Sigmoid colon (tissue), 7 donors: ENCODE measurements at regions of chr10 and their contacts with region 1.

Region 1: DNA sequence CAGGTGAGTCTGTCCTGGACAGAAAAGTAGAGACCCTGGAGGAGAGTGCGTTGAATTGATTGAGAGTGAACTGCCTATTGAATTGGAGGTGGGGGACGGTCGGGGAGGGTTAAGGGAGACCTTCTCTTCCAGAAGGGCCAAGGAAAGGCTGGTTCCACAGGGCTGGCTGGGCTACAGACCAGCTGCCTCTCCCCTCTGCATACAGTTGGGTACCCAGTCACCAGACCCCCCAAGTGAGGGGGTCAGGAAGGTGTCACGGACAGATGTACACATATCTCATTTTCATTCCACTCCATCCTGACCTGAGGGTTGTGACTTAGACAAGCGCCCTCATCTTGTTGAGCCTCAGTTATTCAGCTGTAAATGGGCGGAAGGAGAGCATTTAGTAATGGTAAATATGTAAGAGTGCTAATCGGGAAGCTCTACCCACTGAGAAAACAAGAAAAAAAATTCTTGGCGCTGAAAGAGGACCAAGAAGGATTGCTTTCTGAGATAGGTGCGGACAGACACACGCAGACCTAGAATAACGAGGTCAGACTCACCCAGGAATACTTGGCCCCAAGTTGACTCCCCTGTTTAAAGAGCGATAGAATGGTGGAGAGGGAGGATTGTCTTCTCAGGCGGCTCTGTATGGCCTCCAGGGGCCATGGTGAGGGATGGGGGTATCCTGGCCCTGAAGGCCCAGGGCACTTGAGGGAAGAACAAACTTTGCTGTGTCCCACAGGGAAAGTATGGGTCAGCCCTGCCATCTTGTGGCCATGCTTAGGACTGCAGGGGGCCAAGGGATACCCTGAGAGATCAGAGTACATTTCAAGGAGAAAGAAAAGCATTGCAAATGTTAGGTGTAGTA is 7.2 kb upstream of the MBL2 start:
- DNase-seq: no peak
- H3K4me3 ChIP-seq: no peak overlapping the region
- H3K27ac ChIP-seq: no peak overlapping the region
- H3K4me1 ChIP-seq: no peaks in the 10 kb centered on the region
- H3K27me3 ChIP-seq: peaks cover 0 to 6% (median 0%) of the 10 kb centered on the region in 3 donors
- CTCF ChIP-seq: peak; percentile 11 to 72 (median 53)
- EP300 ChIP-seq: no peak
- POLR2A ChIP-seq: no peak

Region 2: DNA sequence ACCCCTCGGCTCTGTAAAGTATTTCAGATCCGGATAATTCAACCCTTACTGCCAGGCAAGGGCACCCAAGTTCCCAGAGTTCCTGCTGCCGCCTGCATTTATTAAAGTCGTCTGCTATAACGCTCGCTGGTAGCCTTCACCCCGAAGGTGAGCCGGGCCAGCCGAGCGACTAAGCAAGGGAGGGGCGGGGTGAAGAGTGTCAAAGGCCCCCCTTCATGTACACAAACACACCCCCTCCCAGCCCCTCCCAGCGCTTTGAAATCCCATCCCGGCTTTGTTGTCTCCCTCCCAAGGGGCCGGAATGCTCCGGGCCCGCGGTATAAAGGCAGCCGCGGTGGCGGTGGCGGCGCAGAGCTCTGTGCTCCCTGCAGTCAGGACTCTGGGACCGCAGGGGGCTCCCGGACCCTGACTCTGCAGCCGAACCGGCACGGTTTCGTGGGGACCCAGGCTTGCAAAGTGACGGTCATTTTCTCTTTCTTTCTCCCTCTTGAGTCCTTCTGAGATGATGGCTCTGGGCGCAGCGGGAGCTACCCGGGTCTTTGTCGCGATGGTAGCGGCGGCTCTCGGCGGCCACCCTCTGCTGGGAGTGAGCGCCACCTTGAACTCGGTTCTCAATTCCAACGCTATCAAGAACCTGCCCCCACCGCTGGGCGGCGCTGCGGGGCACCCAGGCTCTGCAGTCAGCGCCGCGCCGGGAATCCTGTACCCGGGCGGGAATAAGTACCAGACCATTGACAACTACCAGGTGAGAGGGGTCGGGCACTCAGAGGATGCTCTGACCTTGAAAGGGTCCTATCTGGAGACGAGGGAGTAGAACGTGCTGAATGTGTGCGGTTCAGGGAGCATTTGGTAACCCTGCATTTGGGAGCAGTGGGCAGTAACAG is 465.6 kb before region 1 on chr10 and contains the start of gene DKK1:
- intact Hi-C with region 1: loop called (anchors 5 kb)
- DNase-seq: peak; percentile 69
- H3K4me3 ChIP-seq: peak within 1 kb of the TSS; percentile 17 to 53 (median 50)
- H3K27ac ChIP-seq: no peak within 1 kb of the TSS
- H3K4me1 ChIP-seq: peaks cover 0 to 24% (median 22%) of the 10 kb centered on the region in 4 donors
- H3K27me3 ChIP-seq: peaks cover 15 to 32% (median 24%) of the 10 kb centered on the region in 3 donors
- CTCF ChIP-seq: peak in 3 of 4 experiments; percentile 30 to 52 (median 46)
- EP300 ChIP-seq: no peak
- POLR2A ChIP-seq: no peak
- total RNA-seq, gene DKK1: 0.66 to 2.8 (median 2.3) TPM